Activated B cell treated with CpG ODN at 0.5 μM for 24 hours (primary cell): ENCODE measurements at regions of chr22 and their contacts with region 1.

Region 1: DNA sequence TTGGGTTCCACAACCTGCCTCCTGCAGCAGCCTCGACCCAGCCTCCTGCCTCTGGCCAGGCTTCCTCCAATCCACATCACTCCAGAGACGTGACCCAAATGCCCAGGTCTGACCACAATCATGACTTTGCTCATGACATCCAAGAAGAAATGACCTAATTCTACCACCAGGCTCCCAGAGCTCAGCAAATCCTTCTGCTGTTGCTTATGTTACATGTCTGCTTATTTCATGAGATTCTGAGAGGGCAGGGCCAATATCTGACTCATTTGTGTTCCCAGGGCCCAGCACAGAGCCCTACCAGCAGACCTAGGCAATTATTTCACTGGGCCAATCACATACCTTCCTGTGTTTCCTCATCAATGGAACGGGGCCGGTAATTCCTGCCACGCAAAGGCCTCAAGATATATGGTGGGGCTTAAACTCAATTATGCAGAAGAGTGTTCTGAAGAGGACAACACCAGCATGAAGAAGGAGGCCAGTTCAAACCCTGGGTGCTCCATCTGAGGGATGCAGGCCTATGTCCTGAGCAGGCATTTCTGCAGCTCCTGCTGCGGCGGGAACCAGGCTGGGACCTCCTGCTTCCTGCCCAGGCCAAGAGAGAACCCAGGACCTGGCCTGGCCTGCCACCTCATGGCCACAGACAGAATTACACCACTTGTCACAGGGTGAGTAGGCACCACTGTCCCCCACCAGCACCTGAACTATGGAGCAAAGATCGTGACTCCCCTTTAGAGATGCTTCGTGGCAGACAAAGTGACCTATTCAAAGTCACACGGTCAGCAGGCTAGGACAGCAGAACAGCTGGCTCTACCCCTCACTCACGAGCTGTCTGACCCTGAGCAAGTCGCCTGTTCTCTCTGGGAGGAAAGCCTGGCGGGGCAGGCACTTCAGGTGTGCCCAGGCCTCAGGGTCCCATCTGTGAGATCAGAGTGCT is 5.9 kb downstream of the CENPM start:
- DNase-seq: peak; percentile 85
- ATAC-seq: peak; percentile 55
- H3K4me3 Mint-ChIP-seq: peak overlapping the region; percentile 92
- H3K27ac Mint-ChIP-seq: peak overlapping the region; percentile 100
- H3K4me1 Mint-ChIP-seq: peaks cover 61% of the 10 kb centered on the region
- H3K27me3 Mint-ChIP-seq: no peaks in the 10 kb centered on the region
- CTCF ChIP-seq: no peak

Region 2: GRCh38 chr22:41582694-41583093 is 358.4 kb before region 1 on chr22:
- CTCF ChIA-PET with region 1: no interaction called
- POLR2A ChIA-PET with region 1: no interaction called
- intact Hi-C with region 1: no loop called
- DNase-seq: no peak
- ATAC-seq: no peak
- H3K4me3 Mint-ChIP-seq: no peak overlapping the region
- H3K27ac Mint-ChIP-seq: no peak overlapping the region
- H3K4me1 Mint-ChIP-seq: no peaks in the 10 kb centered on the region
- H3K27me3 Mint-ChIP-seq: no peaks in the 10 kb centered on the region
- CTCF ChIP-seq: no peak

Region 3: DNA sequence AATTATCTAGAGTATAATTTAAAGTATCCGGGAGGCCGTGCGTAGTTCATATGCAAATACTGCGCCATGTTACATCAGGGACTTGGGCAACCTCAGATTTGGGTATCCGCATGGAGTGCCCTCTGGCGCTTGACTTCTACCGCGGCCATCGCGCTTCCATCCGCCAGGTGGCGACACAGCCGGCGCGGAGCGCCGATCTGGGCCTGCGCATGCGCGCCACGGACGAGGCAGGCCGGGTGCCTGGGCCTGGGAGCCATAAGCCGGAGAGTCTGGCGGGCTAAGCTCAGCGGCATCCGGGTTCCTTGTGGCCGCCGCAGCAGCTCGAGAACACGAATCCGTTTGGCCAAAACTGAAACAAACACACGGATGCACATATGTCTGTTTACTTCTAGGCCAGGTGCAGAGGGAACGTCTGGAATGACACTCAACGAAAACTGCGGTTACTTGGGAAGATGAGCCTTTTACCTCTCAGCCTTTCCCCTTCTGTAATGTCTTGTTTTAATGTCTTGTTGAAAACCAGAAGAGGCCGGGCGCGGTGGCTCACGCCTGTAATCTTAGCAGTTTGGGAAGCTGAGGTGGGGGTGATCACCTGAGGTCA is 274.3 kb before region 1 on chr22:
- CTCF ChIA-PET with region 1: interaction called, 4 read pairs
- POLR2A ChIA-PET with region 1: interaction called, 6 read pairs
- intact Hi-C with region 1: loop called (anchors 1 kb)
- DNase-seq: peak; percentile 94
- ATAC-seq: peak; percentile 95
- H3K4me3 Mint-ChIP-seq: peak overlapping the region; percentile 84
- H3K27ac Mint-ChIP-seq: peak overlapping the region; percentile 92
- H3K4me1 Mint-ChIP-seq: peaks cover 5% of the 10 kb centered on the region
- H3K27me3 Mint-ChIP-seq: no peaks in the 10 kb centered on the region
- CTCF ChIP-seq: peak; percentile 74

Region 4: DNA sequence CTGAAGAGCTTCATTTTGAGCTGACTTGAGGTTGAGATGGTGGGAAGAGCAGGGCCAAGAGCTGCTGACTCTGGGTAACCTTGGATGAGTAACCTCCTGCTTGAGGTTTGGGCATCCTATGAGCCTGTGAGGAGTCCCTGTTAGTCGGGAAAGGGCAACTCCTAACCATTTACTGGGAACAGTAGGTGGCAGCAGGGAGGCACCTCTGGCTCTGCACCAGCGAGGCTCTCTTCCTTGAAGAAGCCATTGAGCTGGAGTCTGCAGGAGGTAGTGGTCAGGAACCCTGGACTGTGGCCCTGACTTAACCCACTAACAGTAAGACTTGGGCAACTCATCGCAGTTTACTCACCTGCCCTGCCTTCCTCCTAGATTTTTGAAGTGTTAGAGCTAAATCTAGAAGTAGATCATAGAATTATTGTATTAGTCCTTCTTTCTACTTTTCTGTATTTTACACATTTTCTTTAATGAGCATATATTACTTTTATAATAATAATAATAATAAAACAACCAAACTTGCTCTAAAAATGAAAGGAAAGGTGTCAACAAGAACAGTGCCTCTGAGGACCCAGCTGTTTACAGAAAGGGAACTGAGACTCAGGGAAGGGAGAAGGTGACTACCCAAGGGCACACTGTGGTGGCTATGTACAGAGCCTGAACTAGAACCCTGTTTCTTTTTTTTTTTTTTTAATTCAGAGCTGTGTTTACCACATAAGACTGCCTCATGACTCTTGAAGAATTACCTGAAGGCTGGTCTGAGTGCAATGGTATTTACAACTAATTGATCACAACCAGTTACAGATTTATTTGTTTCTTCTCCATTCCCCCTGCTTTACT is 194.3 kb before region 1 on chr22:
- CTCF ChIA-PET with region 1: interaction called, 10 read pairs
- POLR2A ChIA-PET with region 1: interaction called, 3 read pairs
- intact Hi-C with region 1: loop called (anchors 5 kb)
- DNase-seq: peak; percentile 18
- ATAC-seq: peak; percentile 96
- H3K4me3 Mint-ChIP-seq: peak overlapping the region; percentile 38
- H3K27ac Mint-ChIP-seq: peak overlapping the region; percentile 69
- H3K4me1 Mint-ChIP-seq: peaks cover 31% of the 10 kb centered on the region
- H3K27me3 Mint-ChIP-seq: no peaks in the 10 kb centered on the region
- CTCF ChIP-seq: no peak

Region 5: GRCh38 chr22:41822317-41823060 is 118.6 kb before region 1 on chr22:
- CTCF ChIA-PET with region 1: interaction called, 32 read pairs
- POLR2A ChIA-PET with region 1: interaction called, 221 read pairs
- intact Hi-C with region 1: loop called (anchors 1 kb)
- DNase-seq: no peak
- ATAC-seq: peak; percentile 90
- H3K4me3 Mint-ChIP-seq: no peak overlapping the region
- H3K27ac Mint-ChIP-seq: peak overlapping the region; percentile 26
- H3K4me1 Mint-ChIP-seq: peaks cover 5% of the 10 kb centered on the region
- H3K27me3 Mint-ChIP-seq: no peaks in the 10 kb centered on the region
- CTCF ChIP-seq: no peak

Region 6: DNA sequence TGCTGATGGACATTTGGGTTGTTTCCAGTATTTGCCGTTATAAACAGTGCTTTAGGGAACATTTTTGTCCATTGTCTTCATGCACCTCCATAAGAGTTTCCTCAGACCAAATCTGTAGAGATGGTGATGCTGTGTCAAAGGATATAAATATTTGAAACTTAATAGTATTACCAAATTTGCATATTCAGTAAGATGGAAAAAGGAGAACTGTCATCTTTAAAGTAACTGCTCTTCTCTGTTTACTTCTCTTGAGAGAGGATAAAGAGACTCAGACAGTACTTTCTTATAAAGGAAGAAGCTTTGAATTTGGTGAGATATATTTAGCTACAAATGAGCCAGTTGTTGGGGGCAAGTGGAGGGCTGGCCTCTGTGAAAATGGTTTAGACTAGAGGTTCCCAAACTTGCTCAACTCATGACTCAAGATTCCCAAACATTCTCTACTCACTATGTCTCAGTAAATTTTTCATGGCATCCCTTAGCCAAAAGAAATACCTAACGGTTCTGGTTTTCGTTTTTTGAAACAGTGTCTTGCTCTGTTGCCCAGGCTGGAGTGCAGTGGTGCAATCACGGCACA is 52.4 kb before region 1 on chr22:
- CTCF ChIA-PET with region 1: interaction called, 3 read pairs
- POLR2A ChIA-PET with region 1: interaction called, 7 read pairs
- intact Hi-C with region 1: loop called (anchors 2 kb)
- DNase-seq: no peak
- ATAC-seq: peak; percentile 28
- H3K4me3 Mint-ChIP-seq: peak overlapping the region; percentile 4
- H3K27ac Mint-ChIP-seq: peak overlapping the region; percentile 74
- H3K4me1 Mint-ChIP-seq: peaks cover 59% of the 10 kb centered on the region
- H3K27me3 Mint-ChIP-seq: no peaks in the 10 kb centered on the region
- CTCF ChIP-seq: no peak

Region 7: DNA sequence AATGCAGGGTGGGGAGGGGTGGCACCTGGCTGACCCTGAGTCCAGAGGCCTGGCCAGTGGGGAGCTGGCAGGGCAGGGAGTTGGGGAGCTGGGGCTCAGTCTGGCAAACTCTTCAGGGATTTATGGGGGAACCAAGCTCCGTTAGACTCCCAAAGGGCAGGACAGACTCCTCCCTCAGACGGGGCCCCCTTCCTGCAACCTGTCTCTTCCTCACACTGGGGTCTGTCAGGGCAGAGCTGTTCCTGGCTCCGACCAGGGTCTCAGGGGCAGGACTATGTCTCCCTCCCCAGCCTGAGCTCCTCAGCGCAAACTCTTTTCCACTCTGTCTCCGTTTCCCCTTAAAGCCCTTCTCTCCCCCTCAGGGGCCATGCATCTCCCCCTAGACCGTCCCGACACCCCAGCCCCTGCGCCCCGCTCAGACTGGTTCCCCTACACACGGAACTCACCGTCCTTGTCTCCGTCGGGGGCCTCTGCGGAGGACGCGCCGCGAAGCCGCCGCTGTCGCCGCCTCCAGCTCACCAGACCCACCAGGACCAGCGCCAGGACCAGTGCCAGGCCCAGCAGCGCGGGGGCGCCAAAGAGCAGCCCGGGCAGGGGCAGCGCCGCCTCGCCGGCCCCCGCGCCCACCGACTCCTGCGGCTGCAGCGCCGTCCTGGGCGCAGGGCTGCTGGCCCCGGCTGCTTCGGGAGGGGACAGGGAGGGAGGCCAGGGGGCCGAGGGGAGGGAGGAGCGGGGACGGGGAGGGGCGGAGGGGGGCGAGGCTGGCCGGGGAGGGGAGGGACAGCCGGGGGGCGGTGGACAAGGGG is 15.2 kb before region 1 on chr22:
- CTCF ChIA-PET with region 1: interaction called, 258 read pairs
- POLR2A ChIA-PET with region 1: interaction called, 1,414 read pairs
- intact Hi-C with region 1: loop called (anchors 1 kb)
- DNase-seq: peak; percentile 90
- ATAC-seq: peak; percentile 45
- H3K4me3 Mint-ChIP-seq: peak overlapping the region; percentile 92
- H3K27ac Mint-ChIP-seq: peak overlapping the region; percentile 94
- H3K4me1 Mint-ChIP-seq: peaks cover 83% of the 10 kb centered on the region
- H3K27me3 Mint-ChIP-seq: no peaks in the 10 kb centered on the region
- CTCF ChIP-seq: peak; percentile 26